ENCODE measurements at regions of chr1 and their contacts with region 1.

Region 1: GRCh38 chr1:65773391-65773790 is 19.3 kb upstream of the PDE4B start:
- DNase-seq: no peak
- H3K4me3 Mint-ChIP-seq: no peak overlapping the region
- H3K27ac Mint-ChIP-seq: no peak overlapping the region
- H3K4me1 Mint-ChIP-seq: no peaks in the 10 kb centered on the region
- H3K27me3 Mint-ChIP-seq: peaks cover 6% of the 10 kb centered on the region

Region 2: DNA sequence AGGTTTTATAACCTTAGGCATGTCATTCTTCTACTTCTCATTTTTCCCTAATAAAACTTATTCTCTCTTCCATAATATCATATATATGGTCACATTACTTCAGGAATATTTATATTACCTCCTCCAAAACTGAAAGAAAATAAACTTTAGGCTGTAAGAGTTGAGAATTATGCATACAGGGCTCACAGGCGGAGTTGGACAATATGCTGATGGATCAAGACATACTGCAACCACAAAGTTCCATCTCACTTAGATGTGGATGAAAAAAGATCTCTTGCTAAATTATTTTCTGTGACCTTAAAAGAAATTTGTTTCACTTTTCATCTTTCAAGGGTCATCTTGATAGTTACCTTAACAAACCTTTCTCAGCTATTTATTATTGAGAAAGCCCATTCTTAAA is 133.3 kb before region 1 on chr1:
- CTCF ChIA-PET with region 1: no interaction called
- intact Hi-C with region 1: no loop called
- DNase-seq: no peak
- H3K4me3 Mint-ChIP-seq: no peak overlapping the region
- H3K27ac Mint-ChIP-seq: no peak overlapping the region
- H3K4me1 Mint-ChIP-seq: no peaks in the 10 kb centered on the region
- H3K27me3 Mint-ChIP-seq: peaks cover 7% of the 10 kb centered on the region

Region 3: GRCh38 chr1:65792669-65793358 is 19.4 kb after region 1 on chr1 and contains the start of gene PDE4B:
- CTCF ChIA-PET with region 1: interaction called, 4 read pairs
- intact Hi-C with region 1: loop called (anchors 2 kb)
- DNase-seq: no peak
- H3K4me3 Mint-ChIP-seq: no peak within 1 kb of the TSS
- H3K27ac Mint-ChIP-seq: no peak within 1 kb of the TSS
- H3K4me1 Mint-ChIP-seq: no peaks in the 10 kb centered on the region
- H3K27me3 Mint-ChIP-seq: peaks cover 35% of the 10 kb centered on the region
- total RNA-seq, gene PDE4B: 23.4 to 26.2 TPM

Region 4: GRCh38 chr1:65830306-65830705 is 56.9 kb after region 1 on chr1:
- CTCF ChIA-PET with region 1: no interaction called
- intact Hi-C with region 1: no loop called
- DNase-seq: no peak
- H3K4me3 Mint-ChIP-seq: no peak overlapping the region
- H3K27ac Mint-ChIP-seq: no peak overlapping the region
- H3K4me1 Mint-ChIP-seq: no peaks in the 10 kb centered on the region
- H3K27me3 Mint-ChIP-seq: peaks cover 7% of the 10 kb centered on the region

Measured in activated naive CD4-positive, alpha-beta T cell treated with anti-CD3 and anti-CD28 coated beads for 36 hours (primary cell).